Cardiac septum (tissue), 1 donor: ENCODE measurements at regions of chr1 and their contacts with region 1.

Region 1: DNA sequence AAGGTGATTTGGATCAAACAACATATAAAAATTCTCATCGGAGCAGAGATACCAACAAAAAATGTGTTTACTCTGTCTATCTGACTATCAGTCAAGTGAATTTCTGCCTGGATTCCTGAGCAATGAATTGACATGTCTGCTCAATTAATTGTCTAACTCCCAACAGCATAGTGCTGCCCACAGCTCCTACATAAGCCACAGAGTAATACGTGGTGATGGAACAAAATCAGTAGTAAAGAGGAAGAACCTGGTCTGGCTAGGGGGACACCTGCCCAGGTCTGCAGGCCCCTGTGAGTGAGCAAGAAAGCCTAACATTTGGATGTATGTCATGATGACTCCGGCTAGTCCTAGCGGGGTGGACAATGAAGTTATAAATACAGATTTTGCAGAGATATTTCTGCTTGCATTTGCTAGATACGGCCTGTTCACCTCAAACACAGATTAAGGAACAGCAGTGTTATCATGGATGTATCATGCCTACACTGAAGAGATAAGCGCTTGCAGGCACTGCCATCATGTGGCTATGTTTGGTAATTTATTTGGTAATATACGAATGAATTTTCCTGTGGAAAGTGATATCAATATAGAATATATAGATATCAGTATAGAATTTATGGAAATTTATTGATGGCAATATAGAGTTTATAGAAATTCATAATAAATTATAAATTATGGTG is 69.6 kb upstream of the LRRC8B start:
- DNase-seq: no peak

Region 2: GRCh38 chr1:89358287-89358893 is 96.6 kb before region 1 on chr1:
- intact Hi-C with region 1: loop called (anchors 5 kb)
- DNase-seq: peak; percentile 81

Region 3: GRCh38 chr1:89499320-89499719 is 44.3 kb after region 1 on chr1:
- intact Hi-C with region 1: no loop called
- DNase-seq: no peak

Region 4: GRCh38 chr1:90989990-90990389 is 1535.0 kb after region 1 on chr1:
- intact Hi-C with region 1: no loop called
- DNase-seq: no peak